Activated CD4-positive, alpha-beta T cell treated with anti-CD3 and anti-CD28 coated beads for 36 hours (primary cell): ENCODE measurements at regions of chr9 and their contacts with region 1.

Region 1: DNA sequence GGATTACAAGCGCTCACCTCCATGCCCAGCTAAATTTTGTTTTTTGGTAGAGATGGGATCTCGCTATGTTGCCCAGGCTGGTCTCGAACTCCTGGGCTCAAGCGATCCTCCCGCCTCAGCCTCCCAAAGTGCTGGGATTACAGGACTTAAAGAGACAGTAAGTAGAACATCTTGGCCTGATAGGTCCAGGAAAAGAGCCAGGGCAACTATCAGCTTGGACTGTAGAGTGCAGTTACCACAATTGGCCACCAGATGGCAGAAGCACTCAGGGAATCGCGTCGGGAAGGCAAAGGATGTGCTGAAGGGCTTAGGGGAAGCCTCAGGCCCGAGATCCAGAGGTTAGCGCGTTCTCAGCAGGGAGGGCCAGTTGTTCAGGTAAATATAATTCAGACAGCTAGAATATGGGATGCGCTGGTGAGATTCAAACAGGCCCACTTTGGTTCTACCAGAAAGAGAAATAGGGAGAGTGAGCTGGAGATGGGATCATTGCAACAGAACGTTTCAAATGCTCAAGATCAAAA is 21.5 kb downstream of the C9orf57 start:
- DNase-seq: peak; percentile 79
- ATAC-seq: peak; percentile 79
- H3K4me3 Mint-ChIP-seq: no peak overlapping the region
- H3K27ac Mint-ChIP-seq: no peak overlapping the region
- H3K4me1 Mint-ChIP-seq: peaks cover 5% of the 10 kb centered on the region
- H3K27me3 Mint-ChIP-seq: peaks cover 8% of the 10 kb centered on the region

Region 2: DNA sequence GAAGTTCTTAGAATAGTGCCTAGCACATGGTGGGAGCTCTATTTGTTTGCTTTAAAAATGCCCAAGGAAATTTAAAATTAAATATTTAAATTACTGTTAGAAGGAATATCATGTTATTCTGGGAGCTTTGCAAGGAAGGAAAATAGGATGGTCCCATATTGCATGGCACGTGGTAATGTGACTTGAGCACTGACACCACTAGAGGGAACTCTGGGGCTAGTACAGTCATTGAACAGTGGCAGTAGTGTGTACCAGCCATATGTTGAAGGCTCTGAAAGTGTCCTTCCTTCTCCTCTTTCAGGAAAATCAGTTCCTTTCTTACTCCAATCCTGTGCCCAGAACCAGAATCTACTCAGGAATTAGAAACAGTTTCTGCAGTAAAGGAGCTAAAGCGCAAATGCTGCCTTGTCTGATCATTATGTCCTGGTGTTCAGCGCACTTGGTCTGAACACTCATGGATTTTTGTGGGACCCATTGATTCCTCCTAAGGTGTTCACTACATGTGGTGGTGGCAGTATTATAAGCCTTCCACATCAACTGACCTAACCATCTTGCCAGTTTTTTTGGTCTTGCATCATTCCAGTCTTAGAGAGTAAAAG is 164.4 kb after region 1 on chr9:
- CTCF ChIA-PET with region 1: interaction called, 9 read pairs
- POLR2A ChIA-PET with region 1: no interaction called
- intact Hi-C with region 1: loop called in 1 of 2 experiments (anchors 5 kb)
- DNase-seq: peak; percentile 8
- ATAC-seq: peak; percentile 66
- H3K4me3 Mint-ChIP-seq: no peak overlapping the region
- H3K27ac Mint-ChIP-seq: no peak overlapping the region
- H3K4me1 Mint-ChIP-seq: no peaks in the 10 kb centered on the region
- H3K27me3 Mint-ChIP-seq: peaks cover 2% of the 10 kb centered on the region

Region 3: DNA sequence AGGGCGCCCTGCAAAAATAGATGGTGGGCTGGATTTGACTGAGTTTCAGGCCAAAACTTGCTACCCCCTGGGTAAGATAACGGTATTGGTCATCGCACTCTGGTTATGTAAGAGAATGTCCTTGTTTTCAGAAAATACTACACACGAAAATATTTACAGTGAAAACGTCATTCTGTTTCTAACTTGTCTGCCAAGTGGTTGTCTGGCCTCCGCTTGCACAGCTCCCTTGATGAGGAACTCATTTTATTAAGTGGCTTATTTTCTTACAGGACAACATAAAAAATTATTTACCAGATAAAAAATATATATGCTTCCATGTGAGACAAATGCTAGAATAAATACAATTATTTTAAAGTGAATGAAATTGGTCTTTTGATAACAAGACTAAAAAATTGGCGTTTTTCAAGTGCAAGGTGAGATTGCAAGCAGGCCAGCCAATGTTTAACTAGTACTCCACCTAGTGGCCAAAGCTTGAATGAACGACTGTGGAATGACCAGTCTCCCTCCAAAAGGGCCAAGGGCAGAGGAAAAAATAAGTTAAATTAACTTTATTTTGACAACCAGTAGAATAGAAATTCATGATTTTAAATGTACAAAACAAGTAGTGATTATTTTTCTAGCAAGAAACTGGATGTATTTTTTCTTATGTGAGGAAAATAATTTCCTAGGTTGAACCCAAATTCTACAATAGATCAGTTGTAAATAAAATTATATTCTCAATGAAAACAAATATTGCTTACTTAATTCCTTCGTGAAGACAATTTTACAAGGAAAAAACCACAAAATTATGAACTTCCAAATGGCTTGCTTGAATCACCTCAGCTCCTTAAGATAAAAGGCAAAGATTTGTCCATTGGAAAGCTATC is 232.9 kb after region 1 on chr9:
- CTCF ChIA-PET with region 1: interaction called, 185 read pairs
- POLR2A ChIA-PET with region 1: no interaction called
- intact Hi-C with region 1: loop called (anchors 1 kb)
- DNase-seq: peak; percentile 66
- ATAC-seq: no peak
- H3K4me3 Mint-ChIP-seq: no peak overlapping the region
- H3K27ac Mint-ChIP-seq: no peak overlapping the region
- H3K4me1 Mint-ChIP-seq: no peaks in the 10 kb centered on the region
- H3K27me3 Mint-ChIP-seq: no peaks in the 10 kb centered on the region

Region 4: GRCh38 chr9:72592502-72593403 is 553.8 kb after region 1 on chr9:
- CTCF ChIA-PET with region 1: interaction called, 3 read pairs
- POLR2A ChIA-PET with region 1: no interaction called
- intact Hi-C with region 1: loop called (anchors 5 to 10 kb)
- DNase-seq: peak; percentile 29
- ATAC-seq: peak; percentile 69
- H3K4me3 Mint-ChIP-seq: no peak overlapping the region
- H3K27ac Mint-ChIP-seq: no peak overlapping the region
- H3K4me1 Mint-ChIP-seq: peaks cover 19% of the 10 kb centered on the region
- H3K27me3 Mint-ChIP-seq: peaks cover 6% of the 10 kb centered on the region

Region 5: GRCh38 chr9:73023025-73023541 is 984.1 kb after region 1 on chr9:
- CTCF ChIA-PET with region 1: no interaction called
- POLR2A ChIA-PET with region 1: no interaction called
- intact Hi-C with region 1: loop called in 1 of 2 experiments (anchors 10 kb)
- DNase-seq: peak; percentile 72
- ATAC-seq: peak; percentile 74
- H3K4me3 Mint-ChIP-seq: no peak overlapping the region
- H3K27ac Mint-ChIP-seq: no peak overlapping the region
- H3K4me1 Mint-ChIP-seq: peaks cover 8% of the 10 kb centered on the region
- H3K27me3 Mint-ChIP-seq: peaks cover 11% of the 10 kb centered on the region